ENCODE measurements at regions of chr16 and their contacts with region 1.

Region 1: GRCh38 chr16:75305364-75306098 is 54.1 kb upstream of the BCAR1 start:
- DNase-seq: peak; percentile 99
- ATAC-seq: peak; percentile 87
- H3K4me3 ChIP-seq: peak overlapping the region; percentile 46 to 62 (median 55)
- H3K27ac ChIP-seq: peak overlapping the region; percentile 99
- H3K4me1 ChIP-seq: peaks cover 69% of the 10 kb centered on the region
- H3K27me3 ChIP-seq: no peaks in the 10 kb centered on the region; a peak in 1 of 5 replicates
- CTCF ChIP-seq: no peak; the same call in 1 of the 2 replicates
- EP300 ChIP-seq: peak; percentile 92 to 93
- POLR2A ChIP-seq: peak; percentile 67 to 95
- RAD21 ChIP-seq: no peak

Region 2: GRCh38 chr16:74942977-74943918 is 362.3 kb before region 1 on chr16:
- CTCF ChIA-PET with region 1: no interaction called
- POLR2A ChIA-PET with region 1: no interaction called
- in situ Hi-C with region 1: no loop called
- intact Hi-C with region 1: no loop called
- DNase-seq: no peak
- ATAC-seq: no peak
- H3K4me3 ChIP-seq: no peak overlapping the region
- H3K27ac ChIP-seq: no peak overlapping the region
- H3K4me1 ChIP-seq: peaks cover 5% of the 10 kb centered on the region
- H3K27me3 ChIP-seq: no peaks in the 10 kb centered on the region
- CTCF ChIP-seq: no peak
- EP300 ChIP-seq: no peak
- POLR2A ChIP-seq: no peak
- RAD21 ChIP-seq: no peak

Region 3: GRCh38 chr16:75238132-75238852 is 67.2 kb before region 1 on chr16:
- CTCF ChIA-PET with region 1: no interaction called
- POLR2A ChIA-PET with region 1: interaction called, 312 read pairs
- in situ Hi-C with region 1: no loop called
- intact Hi-C with region 1: no loop called
- DNase-seq: peak; percentile 89
- ATAC-seq: peak; percentile 42
- H3K4me3 ChIP-seq: peak overlapping the region in 1 of 3 experiments; percentile 17; a peak in 1 of 6 replicates
- H3K27ac ChIP-seq: peak overlapping the region; percentile 77
- H3K4me1 ChIP-seq: peaks cover 59% of the 10 kb centered on the region
- H3K27me3 ChIP-seq: no peaks in the 10 kb centered on the region
- CTCF ChIP-seq: no peak
- EP300 ChIP-seq: peak in 1 of 2 experiments; percentile 65; a peak in 3 of 4 replicates
- POLR2A ChIP-seq: no peak
- RAD21 ChIP-seq: no peak

Region 4: GRCh38 chr16:75251280-75252048 is 54.1 kb before region 1 on chr16 and contains the start of gene BCAR1:
- CTCF ChIA-PET with region 1: no interaction called
- POLR2A ChIA-PET with region 1: interaction called, 312 read pairs
- in situ Hi-C with region 1: no loop called
- intact Hi-C with region 1: no loop called
- DNase-seq: peak; percentile 86
- ATAC-seq: peak; percentile 76
- H3K4me3 ChIP-seq: peak within 1 kb of the TSS; percentile 76 to 87 (median 86)
- H3K27ac ChIP-seq: peak within 1 kb of the TSS; percentile 97
- H3K4me1 ChIP-seq: peaks cover 84% of the 10 kb centered on the region
- H3K27me3 ChIP-seq: no peaks in the 10 kb centered on the region; a peak in 1 of 5 replicates
- CTCF ChIP-seq: peak; percentile 25
- EP300 ChIP-seq: no peak
- POLR2A ChIP-seq: no peak; a peak in 1 of 4 replicates
- RAD21 ChIP-seq: peak; percentile 80
- total RNA-seq, gene BCAR1: 35.9 and 48.1 TPM in 2 replicates

Region 5: GRCh38 chr16:75272097-75272551 is 33.4 kb before region 1 on chr16:
- CTCF ChIA-PET with region 1: no interaction called
- POLR2A ChIA-PET with region 1: interaction called, 71 read pairs
- in situ Hi-C with region 1: loop called (anchors 5 kb)
- intact Hi-C with region 1: no loop called
- DNase-seq: peak; percentile 73
- ATAC-seq: peak; percentile 37
- H3K4me3 ChIP-seq: peak overlapping the region; percentile 41 to 59 (median 56)
- H3K27ac ChIP-seq: no peak overlapping the region
- H3K4me1 ChIP-seq: peaks cover 60% of the 10 kb centered on the region
- H3K27me3 ChIP-seq: no peaks in the 10 kb centered on the region
- CTCF ChIP-seq: no peak
- EP300 ChIP-seq: no peak
- POLR2A ChIP-seq: no peak
- RAD21 ChIP-seq: no peak

Region 6: DNA sequence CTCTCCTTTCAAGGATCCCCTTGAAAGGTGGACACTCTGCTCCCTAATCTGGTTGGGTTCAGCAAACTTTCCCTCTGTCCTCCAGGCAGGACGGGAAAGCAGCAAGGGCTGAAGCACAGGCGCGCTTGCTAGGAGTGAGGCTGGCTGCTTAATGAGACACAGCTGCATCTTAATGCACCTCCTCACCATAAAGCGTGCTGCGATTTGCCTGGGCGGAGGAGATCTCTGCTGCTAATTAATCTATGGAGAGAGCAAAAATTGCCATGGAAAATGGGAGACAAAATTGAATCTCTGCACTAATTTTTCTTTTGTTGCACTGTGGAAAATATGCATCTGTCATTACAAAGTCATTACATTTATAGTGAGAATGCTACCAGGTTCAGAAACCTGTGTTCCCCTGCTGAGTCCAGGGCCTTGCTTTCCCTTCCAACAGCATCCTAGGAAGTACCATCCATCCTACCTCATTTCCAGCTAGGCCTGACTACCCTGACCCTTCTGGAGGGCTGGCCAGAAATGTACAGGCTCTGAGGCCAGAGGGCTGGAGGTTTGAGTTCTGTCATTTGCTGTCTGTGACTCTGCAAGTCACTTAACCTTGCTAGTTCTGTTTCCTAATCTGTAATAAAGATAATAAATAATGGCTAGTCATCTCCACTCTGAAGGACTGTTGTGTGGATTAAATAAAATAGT is 10.6 kb before region 1 on chr16:
- CTCF ChIA-PET with region 1: no interaction called
- POLR2A ChIA-PET with region 1: interaction called, 21 read pairs
- in situ Hi-C with region 1: no loop called
- intact Hi-C with region 1: no loop called
- DNase-seq: no peak
- ATAC-seq: no peak
- H3K4me3 ChIP-seq: no peak overlapping the region
- H3K27ac ChIP-seq: no peak overlapping the region
- H3K4me1 ChIP-seq: peaks cover 15% of the 10 kb centered on the region
- H3K27me3 ChIP-seq: no peaks in the 10 kb centered on the region
- CTCF ChIP-seq: no peak
- EP300 ChIP-seq: no peak
- POLR2A ChIP-seq: no peak
- RAD21 ChIP-seq: no peak

Region 7: DNA sequence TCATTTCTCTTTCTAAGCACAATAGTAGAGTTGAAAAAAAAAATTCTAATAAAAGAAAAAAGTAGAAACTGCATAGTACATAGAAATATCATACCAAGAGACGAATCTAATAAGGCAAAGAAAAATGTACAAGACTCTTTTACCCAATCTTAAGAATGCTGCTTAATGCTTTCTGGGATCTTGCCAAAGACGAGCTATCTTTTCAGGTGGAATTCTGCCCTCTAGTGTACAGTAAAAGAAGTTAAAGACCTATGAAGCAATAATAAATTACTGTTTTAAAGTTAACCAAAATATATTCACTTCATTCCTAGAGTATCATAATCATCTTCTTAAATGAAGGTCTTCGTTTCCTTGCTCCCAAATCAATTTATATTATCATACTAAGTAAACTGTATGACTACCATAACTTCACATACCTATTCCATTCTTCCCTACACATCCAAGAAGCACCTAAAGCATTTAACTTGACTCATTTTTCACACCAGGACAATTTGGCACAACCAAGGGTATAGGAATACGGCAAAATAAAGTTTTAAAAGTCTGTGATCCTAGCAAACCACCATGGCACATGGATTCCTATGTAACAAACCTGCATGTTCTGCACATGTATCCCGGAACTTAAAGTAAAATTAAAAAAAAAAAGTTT is 80.1 kb after region 1 on chr16:
- CTCF ChIA-PET with region 1: no interaction called
- POLR2A ChIA-PET with region 1: interaction called, 8 read pairs
- in situ Hi-C with region 1: no loop called
- intact Hi-C with region 1: loop called (anchors 2 kb)
- DNase-seq: peak; percentile 68
- ATAC-seq: no peak
- H3K4me3 ChIP-seq: no peak overlapping the region
- H3K27ac ChIP-seq: no peak overlapping the region
- H3K4me1 ChIP-seq: no peaks in the 10 kb centered on the region
- H3K27me3 ChIP-seq: no peaks in the 10 kb centered on the region
- CTCF ChIP-seq: peak; percentile 74
- EP300 ChIP-seq: no peak
- POLR2A ChIP-seq: no peak
- RAD21 ChIP-seq: peak; percentile 69; the same call in 1 of the 2 replicates